ENCODE measurements at regions of chr9 and their contacts with region 1.

Region 1: GRCh38 chr9:125143375-125144090 is at the start of gene SCAI:
- DNase-seq: peak; percentile 99
- ATAC-seq: peak; percentile 100
- total RNA-seq, gene SCAI: 3.4 TPM

Region 2: DNA sequence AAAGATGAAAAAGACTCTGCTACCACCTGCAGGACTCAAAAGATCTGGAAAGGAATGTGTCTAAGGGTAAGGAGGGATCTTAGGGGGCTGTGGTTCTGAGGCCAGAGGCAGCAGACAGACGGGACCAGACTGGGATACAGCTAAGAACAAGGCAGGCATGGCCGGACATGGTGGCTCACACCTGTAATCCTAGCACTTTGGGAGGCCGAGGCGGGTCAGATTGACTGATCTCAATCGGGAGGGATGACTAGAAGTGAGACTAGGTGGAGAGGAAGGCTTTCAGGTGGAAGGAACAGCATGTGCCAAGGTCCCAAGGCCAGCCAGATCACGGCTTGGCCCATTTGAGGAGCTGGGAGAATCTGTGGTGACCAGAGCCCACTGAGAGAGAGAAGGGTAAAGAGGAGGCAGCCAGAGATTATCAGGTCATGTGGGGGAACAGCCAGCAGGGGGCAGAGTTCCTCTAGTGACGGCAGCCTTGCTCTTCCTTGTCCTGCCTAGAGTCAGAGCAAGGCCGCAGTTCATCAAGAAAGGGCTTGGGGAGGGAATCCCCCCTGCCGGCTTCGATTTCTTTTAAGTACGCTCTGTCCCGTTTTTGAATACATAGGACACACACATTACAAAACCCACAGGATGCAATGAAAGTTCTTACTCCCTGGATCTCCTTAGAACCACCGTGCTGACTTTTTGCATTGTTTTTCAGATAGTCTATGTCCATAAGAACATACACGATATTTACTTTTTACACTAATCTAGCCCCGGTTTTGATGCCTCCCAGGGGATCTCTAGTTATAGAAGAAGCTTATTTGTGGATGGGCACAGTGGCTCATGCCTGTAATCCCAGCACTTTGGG is 369.2 kb before region 1 on chr9:
- intact Hi-C with region 1: loop called (anchors 2 kb)
- DNase-seq: peak; percentile 88
- ATAC-seq: peak; percentile 26

Region 3: DNA sequence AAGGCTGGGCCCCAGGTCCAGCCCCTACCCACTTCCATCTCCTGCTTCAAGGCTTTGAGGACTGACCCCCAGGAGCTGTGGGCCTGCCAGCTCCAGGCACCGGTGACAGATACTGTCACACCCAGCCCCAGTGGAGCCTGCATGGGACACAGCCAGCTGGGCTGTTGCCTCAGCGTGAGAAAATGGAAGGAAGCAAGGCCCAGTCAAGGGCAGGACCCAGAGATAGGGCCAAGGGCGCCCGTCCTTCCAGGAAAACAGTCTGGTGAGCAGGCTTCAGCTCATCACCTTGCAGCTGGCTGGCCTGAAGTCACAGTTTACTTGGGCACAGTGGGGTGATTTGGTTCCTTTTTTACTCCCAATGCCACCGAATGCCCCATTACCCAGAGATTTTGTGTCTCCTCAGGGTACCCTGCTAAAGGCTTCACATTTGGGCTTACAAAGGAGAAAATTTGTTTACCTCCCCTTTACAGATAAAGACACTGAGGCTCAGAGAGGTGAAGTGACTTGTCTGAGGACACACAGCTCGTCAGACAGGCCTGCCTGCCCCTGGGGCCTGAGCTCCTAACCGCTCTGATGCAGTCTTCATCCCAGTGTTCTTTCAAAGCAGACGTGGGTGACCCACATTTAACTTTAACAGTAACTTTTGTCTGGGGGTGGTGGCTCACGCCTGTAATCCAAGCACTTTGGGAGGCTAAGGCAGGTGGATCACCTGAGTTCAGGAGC is 311.7 kb before region 1 on chr9:
- intact Hi-C with region 1: no loop called
- DNase-seq: peak; percentile 86
- ATAC-seq: peak; percentile 88

Region 4: GRCh38 chr9:124869986-124870560 is 273.5 kb before region 1 on chr9:
- intact Hi-C with region 1: loop called (anchors 5 kb)
- DNase-seq: no peak
- ATAC-seq: no peak

Region 5: GRCh38 chr9:125024917-125025316 is 118.6 kb before region 1 on chr9:
- intact Hi-C with region 1: no loop called
- DNase-seq: no peak
- ATAC-seq: no peak

Region 6: DNA sequence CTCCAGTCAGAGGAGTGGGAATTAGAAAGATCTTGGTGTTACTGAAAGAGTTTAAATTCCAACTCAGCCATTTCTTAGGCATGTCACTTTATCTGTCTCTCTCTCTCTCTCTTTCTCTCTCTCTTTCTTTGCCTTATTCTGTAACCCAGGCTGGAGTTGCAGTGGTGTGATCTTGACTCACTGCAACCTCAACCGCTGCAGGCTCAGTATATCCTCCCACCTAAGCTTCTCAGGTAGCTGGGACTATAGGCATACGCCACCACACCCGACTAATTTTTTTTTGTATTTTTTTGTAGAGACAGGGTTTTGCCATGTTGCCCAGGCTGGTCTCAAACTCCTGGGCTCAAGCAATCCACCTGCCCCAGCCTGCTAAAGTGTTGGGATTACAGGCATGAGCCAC is 75.1 kb after region 1 on chr9:
- intact Hi-C with region 1: no loop called
- DNase-seq: no peak
- ATAC-seq: no peak

Measured in Right ventricle myocardium inferior (tissue), 1 donor.